ENCODE measurements at regions of chr7 and their contacts with region 1.

Region 1: GRCh38 chr7:123712619-123713018 is 36.2 kb downstream of the WASL start:
- DNase-seq: no peak
- ATAC-seq: no peak

Region 2: DNA sequence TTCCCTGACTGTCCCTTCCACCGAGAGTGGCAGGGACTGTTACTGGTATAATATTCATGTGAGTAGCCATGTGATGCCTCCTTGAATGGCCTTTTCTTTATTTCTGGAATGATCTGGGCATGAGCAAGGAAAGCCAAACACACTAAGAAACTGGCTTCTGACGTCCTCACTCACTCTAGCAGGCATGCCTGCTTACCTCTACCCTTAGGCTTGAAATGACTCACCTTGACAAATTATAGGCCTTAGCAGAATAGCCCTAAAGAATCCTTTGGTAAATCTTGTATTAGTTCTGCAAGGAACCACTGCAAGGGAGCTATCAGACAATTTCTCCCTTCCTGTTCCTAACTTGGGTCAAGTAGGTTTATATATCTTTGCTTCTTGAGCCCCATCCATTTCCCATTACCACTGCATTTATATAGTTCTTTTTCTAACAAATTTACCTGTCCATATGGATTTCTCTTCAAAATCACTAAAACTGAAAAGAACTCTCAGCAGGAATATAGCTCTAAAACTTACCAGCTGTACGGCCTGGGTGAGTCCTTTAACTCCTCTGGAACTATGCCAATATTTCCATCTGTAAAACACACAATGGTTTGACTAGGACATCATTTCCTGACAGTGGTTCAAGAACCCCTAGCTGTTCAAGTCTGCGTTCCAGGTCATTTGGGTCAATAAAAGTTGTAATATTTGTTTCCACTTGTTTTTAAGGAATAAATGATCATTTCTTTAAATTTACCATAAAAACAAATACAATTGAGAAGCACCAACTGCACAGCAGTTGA is 142.0 kb before region 1 on chr7:
- intact Hi-C with region 1: no loop called
- DNase-seq: no peak
- ATAC-seq: no peak

Region 3: GRCh38 chr7:123748734-123749536 is 36.3 kb after region 1 on chr7 and contains the start of gene WASL:
- intact Hi-C with region 1: loop called in 1 of 2 experiments (anchors 5 kb)
- DNase-seq: peak; percentile 93
- ATAC-seq: peak; percentile 96
- total RNA-seq, gene WASL: 25.1 to 26.8 TPM

Measured in left cardiac atrium (tissue), 4 donors.